Psoas muscle (tissue), 8 donors: ENCODE measurements at regions of chr12 and their contacts with region 1.

Region 1: GRCh38 chr12:105141320-105141918 is 33.9 kb downstream of the WASHC4 start:
- DNase-seq: no peak
- ATAC-seq: no peak
- H3K4me3 ChIP-seq: no peak overlapping the region
- H3K27ac ChIP-seq: no peak overlapping the region
- H3K4me1 ChIP-seq: no peaks in the 10 kb centered on the region
- H3K27me3 ChIP-seq: no peaks in the 10 kb centered on the region
- CTCF ChIP-seq: no peak

Region 2: GRCh38 chr12:104090687-104091086 is 1050.7 kb before region 1 on chr12:
- intact Hi-C with region 1: loop called (anchors 10 kb)
- DNase-seq: no peak
- ATAC-seq: no peak
- H3K4me3 ChIP-seq: no peak overlapping the region
- H3K27ac ChIP-seq: no peak overlapping the region
- H3K4me1 ChIP-seq: no peaks in the 10 kb centered on the region
- H3K27me3 ChIP-seq: no peaks in the 10 kb centered on the region
- CTCF ChIP-seq: no peak

Region 3: GRCh38 chr12:104314242-104314614 is 827.2 kb before region 1 on chr12:
- intact Hi-C with region 1: loop called in 1 of 2 experiments (anchors 10 kb)
- DNase-seq: no peak
- ATAC-seq: peak; percentile 40 to 64 (median 55)
- H3K4me3 ChIP-seq: no peak overlapping the region
- H3K27ac ChIP-seq: peak overlapping the region; percentile 42
- H3K4me1 ChIP-seq: no peaks in the 10 kb centered on the region
- H3K27me3 ChIP-seq: no peaks in the 10 kb centered on the region
- CTCF ChIP-seq: no peak

Region 4: DNA sequence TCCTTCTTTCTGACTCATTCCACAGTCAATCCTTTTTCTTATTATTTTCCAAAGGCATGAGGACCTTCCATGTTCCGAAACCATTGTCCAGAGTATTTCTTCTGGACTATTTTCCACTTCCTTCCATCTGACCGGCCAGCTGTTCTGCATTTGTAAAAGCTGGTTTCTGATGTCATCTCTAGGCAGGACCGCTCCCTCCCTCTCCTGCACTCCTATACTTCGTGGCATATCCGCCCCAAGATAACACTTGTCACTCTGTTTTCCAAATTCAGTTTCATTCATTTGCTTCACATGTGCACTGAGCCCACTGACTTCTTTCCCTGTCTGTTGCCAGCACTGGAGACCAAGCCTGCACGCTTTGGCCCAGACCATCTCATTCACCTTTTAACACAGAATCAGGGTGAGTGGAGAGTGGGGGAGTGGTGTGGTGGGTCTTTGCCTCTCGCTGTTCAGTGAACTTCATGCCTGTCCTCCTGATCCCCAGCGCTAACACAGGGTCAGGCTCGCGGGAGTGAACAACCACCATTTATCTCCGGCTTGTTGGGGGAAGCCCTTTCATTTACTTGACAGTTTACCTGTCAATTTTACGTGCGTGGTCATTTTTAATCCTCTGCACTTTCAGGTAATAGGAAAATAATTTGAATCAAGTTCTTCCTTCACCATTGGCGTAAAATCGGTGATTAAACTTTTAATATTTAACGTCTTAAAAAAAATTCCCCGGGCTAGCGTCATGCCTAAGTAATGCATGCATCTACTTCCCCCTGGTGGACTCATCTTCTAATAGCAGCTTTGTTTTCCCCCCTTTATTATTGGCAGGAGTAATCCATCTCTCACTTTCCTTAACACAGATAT is 241.6 kb after region 1 on chr12:
- intact Hi-C with region 1: no loop called
- DNase-seq: no peak
- ATAC-seq: peak; percentile 74 to 91 (median 81)
- H3K4me3 ChIP-seq: peak overlapping the region; percentile 49
- H3K27ac ChIP-seq: no peak overlapping the region
- H3K4me1 ChIP-seq: no peaks in the 10 kb centered on the region
- H3K27me3 ChIP-seq: no peaks in the 10 kb centered on the region
- CTCF ChIP-seq: peak; percentile 81